K562 (cell line): ENCODE measurements at regions of chr17 and their contacts with region 1.

Region 1: GRCh38 chr17:27601069-27601975 is 29.7 kb upstream of the LGALS9 start:
- DNase-seq: peak; percentile 68 to 88 (median 74)
- ATAC-seq: peak; percentile 48
- H3K4me3 ChIP-seq: no peak overlapping the region
- H3K27ac ChIP-seq: peak overlapping the region; percentile 92
- H3K4me1 ChIP-seq: peaks cover 38 to 48% of the 10 kb centered on the region in 2 experiments
- H3K27me3 ChIP-seq: no peaks in the 10 kb centered on the region
- CTCF ChIP-seq: peak; percentile 87 to 95 (median 94)
- EP300 ChIP-seq: peak; percentile 34; the same call in 1 of the 2 replicates
- POLR2A ChIP-seq: no peak
- RAD21 ChIP-seq: peak; percentile 89 to 91

Region 2: DNA sequence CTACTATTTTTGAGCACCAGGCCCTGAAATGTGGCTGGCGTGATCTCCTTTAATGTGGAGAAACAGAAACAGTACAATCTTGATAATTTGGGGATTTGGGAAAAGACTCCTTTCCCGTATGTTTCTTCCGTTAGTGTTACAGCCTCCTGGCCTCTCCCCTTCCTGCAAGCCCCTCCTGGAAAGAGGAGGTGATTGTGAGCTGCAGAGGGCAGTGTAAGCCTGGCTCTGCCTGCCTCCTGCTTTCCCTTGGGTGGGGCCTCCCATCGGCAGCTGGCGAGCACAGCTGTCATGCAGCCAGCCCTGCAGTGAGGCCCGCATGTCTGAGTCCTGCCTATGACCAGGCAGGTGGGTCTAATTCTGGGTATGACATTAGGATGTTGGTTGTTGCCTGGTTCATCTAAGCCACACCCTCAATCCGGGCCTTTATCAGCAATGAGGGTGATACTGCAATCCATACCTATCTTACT is 356.1 kb before region 1 on chr17:
- CTCF ChIA-PET with region 1: interaction called, 11 read pairs
- POLR2A ChIA-PET with region 1: interaction called, 3 read pairs
- in situ Hi-C with region 1: loop called (anchors 10 kb)
- intact Hi-C with region 1: loop called (anchors 1 kb)
- DNase-seq: peak; percentile 84 to 90 (median 88)
- ATAC-seq: peak; percentile 100
- H3K4me3 ChIP-seq: no peak overlapping the region
- H3K27ac ChIP-seq: no peak overlapping the region
- H3K4me1 ChIP-seq: peaks cover 7 to 13% of the 10 kb centered on the region in 2 experiments; a peak in 4 of 5 replicates
- H3K27me3 ChIP-seq: no peaks in the 10 kb centered on the region; a peak in 1 of 5 replicates
- CTCF ChIP-seq: peak; percentile 95 to 97 (median 96)
- EP300 ChIP-seq: no peak
- POLR2A ChIP-seq: no peak
- RAD21 ChIP-seq: peak; percentile 98 to 99

Region 3: GRCh38 chr17:27381007-27381501 is 220.3 kb before region 1 on chr17:
- CTCF ChIA-PET with region 1: interaction called, 13 read pairs
- POLR2A ChIA-PET with region 1: no interaction called
- in situ Hi-C with region 1: loop called (anchors 10 kb)
- intact Hi-C with region 1: loop called (anchors 1 kb)
- DNase-seq: peak; percentile 93 to 95 (median 94)
- ATAC-seq: peak; percentile 94
- H3K4me3 ChIP-seq: no peak overlapping the region
- H3K27ac ChIP-seq: peak overlapping the region; percentile 39; the same call in 1 of the 3 replicates
- H3K4me1 ChIP-seq: peaks cover 26 to 30% of the 10 kb centered on the region in 2 experiments
- H3K27me3 ChIP-seq: no peaks in the 10 kb centered on the region
- CTCF ChIP-seq: peak; percentile 100
- EP300 ChIP-seq: peak; percentile 69
- POLR2A ChIP-seq: no peak
- RAD21 ChIP-seq: peak; percentile 92 to 98

Region 4: DNA sequence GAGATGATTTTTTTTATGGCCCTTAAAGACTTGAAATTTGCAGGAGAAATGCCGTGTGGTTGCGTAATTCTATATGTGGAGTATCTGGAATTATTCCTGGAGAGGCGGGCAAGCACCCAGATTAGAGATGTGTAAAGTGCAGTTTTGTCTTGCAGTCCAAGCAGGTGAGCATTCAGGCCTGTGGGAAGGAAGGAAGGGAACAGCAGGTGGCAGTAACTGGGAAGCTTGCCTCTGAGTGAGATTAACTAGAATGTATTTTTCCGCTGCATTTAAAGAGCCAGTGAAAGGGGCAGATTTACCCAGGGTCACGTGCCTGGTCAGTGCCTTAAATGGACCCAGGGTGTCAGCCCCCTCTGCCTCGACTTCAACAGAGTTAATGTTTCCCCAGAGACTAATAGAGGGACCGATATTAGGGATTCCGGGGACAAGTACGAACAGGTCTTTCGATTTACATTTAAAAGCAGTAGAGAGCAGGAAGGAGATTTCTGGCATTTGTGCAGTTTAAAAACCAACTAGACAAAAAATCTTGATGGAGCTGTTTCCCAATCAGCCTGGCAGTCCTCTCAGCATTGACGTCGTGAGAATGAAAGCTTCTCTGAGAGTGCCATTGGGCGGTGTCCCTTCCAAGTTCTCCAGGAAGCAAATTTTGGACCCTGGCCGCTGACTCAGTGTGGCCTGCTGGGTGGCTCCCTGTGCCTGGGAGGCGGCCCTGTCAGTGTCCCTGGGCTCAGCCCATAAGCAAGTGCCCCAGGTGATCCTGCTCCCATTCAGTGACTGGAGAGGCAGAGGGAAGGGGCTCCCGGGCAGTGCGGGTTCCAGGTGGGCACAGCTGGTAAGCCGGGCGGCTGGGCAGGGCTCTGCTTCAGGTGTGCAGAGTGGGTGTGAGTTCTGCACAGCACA is 106.9 kb before region 1 on chr17:
- CTCF ChIA-PET with region 1: interaction called, 6 read pairs
- POLR2A ChIA-PET with region 1: interaction called, 4 read pairs
- in situ Hi-C with region 1: no loop called
- intact Hi-C with region 1: loop called (anchors 2 kb)
- DNase-seq: no peak
- ATAC-seq: no peak
- H3K4me3 ChIP-seq: no peak overlapping the region
- H3K27ac ChIP-seq: no peak overlapping the region
- H3K4me1 ChIP-seq: peaks cover 35 to 61% of the 10 kb centered on the region in 2 experiments
- H3K27me3 ChIP-seq: no peaks in the 10 kb centered on the region
- CTCF ChIP-seq: peak; percentile 24 to 43 (median 40); a peak in 2 of 6 replicates
- EP300 ChIP-seq: no peak
- POLR2A ChIP-seq: no peak
- RAD21 ChIP-seq: peak in 1 of 2 experiments; percentile 50; a peak in 2 of 4 replicates

Region 5: GRCh38 chr17:27569257-27569722 is 32.0 kb before region 1 on chr17:
- CTCF ChIA-PET with region 1: no interaction called
- POLR2A ChIA-PET with region 1: interaction called, 3 read pairs
- in situ Hi-C with region 1: no loop called
- intact Hi-C with region 1: loop called (anchors 2 kb)
- DNase-seq: peak; percentile 87 to 93 (median 91)
- ATAC-seq: peak; percentile 80
- H3K4me3 ChIP-seq: no peak overlapping the region
- H3K27ac ChIP-seq: peak overlapping the region; percentile 92
- H3K4me1 ChIP-seq: peaks cover 61 to 84% of the 10 kb centered on the region in 2 experiments
- H3K27me3 ChIP-seq: no peaks in the 10 kb centered on the region
- CTCF ChIP-seq: peak; percentile 84 to 96 (median 89)
- EP300 ChIP-seq: peak; percentile 45; the same call in 1 of the 2 replicates
- POLR2A ChIP-seq: no peak
- RAD21 ChIP-seq: peak; percentile 62 to 78

Region 6: GRCh38 chr17:27654654-27655524 is 53.6 kb after region 1 on chr17:
- CTCF ChIA-PET with region 1: interaction called, 24 read pairs
- POLR2A ChIA-PET with region 1: no interaction called
- in situ Hi-C with region 1: loop called (anchors 5 kb)
- intact Hi-C with region 1: loop called (anchors 1 kb)
- DNase-seq: peak; percentile 91 to 95 (median 92)
- ATAC-seq: peak; percentile 95
- H3K4me3 ChIP-seq: no peak overlapping the region
- H3K27ac ChIP-seq: no peak overlapping the region
- H3K4me1 ChIP-seq: peaks cover 7 to 18% of the 10 kb centered on the region in 2 experiments; a peak in 4 of 5 replicates
- H3K27me3 ChIP-seq: no peaks in the 10 kb centered on the region
- CTCF ChIP-seq: peak; percentile 89 to 99 (median 91)
- EP300 ChIP-seq: no peak
- POLR2A ChIP-seq: no peak
- RAD21 ChIP-seq: peak; percentile 71 to 85

Region 7: GRCh38 chr17:27701963-27702362 is 100.6 kb after region 1 on chr17:
- CTCF ChIA-PET with region 1: no interaction called
- POLR2A ChIA-PET with region 1: no interaction called
- in situ Hi-C with region 1: no loop called
- intact Hi-C with region 1: no loop called
- DNase-seq: no peak
- ATAC-seq: no peak
- H3K4me3 ChIP-seq: no peak overlapping the region
- H3K27ac ChIP-seq: no peak overlapping the region
- H3K4me1 ChIP-seq: no peaks in the 10 kb centered on the region
- H3K27me3 ChIP-seq: no peaks in the 10 kb centered on the region
- CTCF ChIP-seq: no peak
- EP300 ChIP-seq: no peak
- POLR2A ChIP-seq: no peak
- RAD21 ChIP-seq: no peak